Ascending aorta (tissue), 2 donors: ENCODE measurements at regions of chr9 and their contacts with region 1.

Region 1: DNA sequence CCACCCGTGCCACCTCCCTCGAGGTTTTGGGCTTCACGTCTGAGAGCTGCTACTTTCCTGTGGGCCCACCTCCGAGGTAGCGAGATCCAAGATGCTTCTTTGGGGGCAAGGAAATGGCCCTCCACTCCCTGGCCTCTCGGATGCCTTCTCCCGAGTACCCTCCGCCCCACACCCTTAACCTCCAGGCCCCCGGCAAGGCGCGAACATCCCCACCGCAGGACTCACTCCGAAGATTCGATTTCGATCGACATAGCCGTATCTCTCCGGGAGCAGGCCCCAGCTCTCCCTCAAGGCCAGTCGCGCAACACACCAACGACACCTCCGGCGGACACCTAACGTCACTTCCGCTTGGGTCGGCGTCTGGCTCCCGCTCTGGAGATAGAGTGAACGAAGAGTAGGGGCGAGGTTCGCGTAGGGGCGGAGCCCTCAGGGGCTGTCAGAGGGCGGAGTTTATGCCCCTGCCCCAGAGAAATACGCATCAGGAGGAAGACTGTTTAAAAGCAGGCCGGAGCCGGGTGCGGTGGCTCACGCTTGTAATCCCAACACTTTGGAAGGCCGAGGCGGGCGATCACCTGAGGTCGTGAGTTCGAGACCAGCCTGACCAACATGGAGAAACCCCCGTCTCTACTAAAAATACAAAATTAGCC is at the start of gene SMU1:
- DNase-seq: peak; percentile 94 to 99
- H3K4me3 ChIP-seq: peak within 1 kb of the TSS; percentile 83 to 94
- H3K27ac ChIP-seq: peak within 1 kb of the TSS; percentile 94 to 97
- H3K4me1 ChIP-seq: peaks cover 1 to 11% of the 10 kb centered on the region in 2 donors
- H3K27me3 ChIP-seq: no peaks in the 10 kb centered on the region
- CTCF ChIP-seq: no peak
- total RNA-seq, gene SMU1: 7.2 TPM

Region 2: GRCh38 chr9:32748013-32748412 is 328.5 kb before region 1 on chr9:
- intact Hi-C with region 1: no loop called
- DNase-seq: no peak
- H3K4me3 ChIP-seq: no peak overlapping the region
- H3K27ac ChIP-seq: no peak overlapping the region
- H3K4me1 ChIP-seq: no peaks in the 10 kb centered on the region
- H3K27me3 ChIP-seq: no peaks in the 10 kb centered on the region
- CTCF ChIP-seq: no peak

Region 3: DNA sequence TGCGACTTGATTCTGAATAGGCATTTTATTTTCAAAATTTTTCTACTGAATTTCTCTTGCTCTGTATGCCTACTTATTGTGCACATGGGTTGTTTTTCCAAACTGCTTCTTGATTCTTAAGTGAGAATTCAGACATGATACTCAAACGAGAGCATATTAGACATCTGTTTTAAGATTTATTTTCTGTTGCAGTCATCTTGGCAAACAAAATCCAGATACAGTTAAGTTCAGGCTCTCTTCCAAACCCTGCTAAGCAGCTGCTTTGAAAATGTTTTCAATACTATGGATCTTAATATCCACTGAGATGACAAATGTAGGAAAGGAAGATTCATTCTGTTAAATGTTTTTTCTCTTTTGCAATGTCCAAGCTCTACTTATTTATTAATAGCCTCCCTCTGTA is 288.7 kb before region 1 on chr9:
- intact Hi-C with region 1: no loop called
- DNase-seq: no peak
- H3K4me3 ChIP-seq: no peak overlapping the region
- H3K27ac ChIP-seq: no peak overlapping the region
- H3K4me1 ChIP-seq: no peaks in the 10 kb centered on the region
- H3K27me3 ChIP-seq: no peaks in the 10 kb centered on the region
- CTCF ChIP-seq: no peak

Region 4: GRCh38 chr9:33044127-33044673 is 32.3 kb before region 1 on chr9:
- intact Hi-C with region 1: loop called (anchors 2 kb)
- DNase-seq: peak; percentile 71 to 95
- H3K4me3 ChIP-seq: peak overlapping the region; percentile 71 to 77
- H3K27ac ChIP-seq: peak overlapping the region; percentile 97 to 98
- H3K4me1 ChIP-seq: peaks cover 0 to 3% of the 10 kb centered on the region in 2 donors
- H3K27me3 ChIP-seq: no peaks in the 10 kb centered on the region
- CTCF ChIP-seq: no peak

Region 5: DNA sequence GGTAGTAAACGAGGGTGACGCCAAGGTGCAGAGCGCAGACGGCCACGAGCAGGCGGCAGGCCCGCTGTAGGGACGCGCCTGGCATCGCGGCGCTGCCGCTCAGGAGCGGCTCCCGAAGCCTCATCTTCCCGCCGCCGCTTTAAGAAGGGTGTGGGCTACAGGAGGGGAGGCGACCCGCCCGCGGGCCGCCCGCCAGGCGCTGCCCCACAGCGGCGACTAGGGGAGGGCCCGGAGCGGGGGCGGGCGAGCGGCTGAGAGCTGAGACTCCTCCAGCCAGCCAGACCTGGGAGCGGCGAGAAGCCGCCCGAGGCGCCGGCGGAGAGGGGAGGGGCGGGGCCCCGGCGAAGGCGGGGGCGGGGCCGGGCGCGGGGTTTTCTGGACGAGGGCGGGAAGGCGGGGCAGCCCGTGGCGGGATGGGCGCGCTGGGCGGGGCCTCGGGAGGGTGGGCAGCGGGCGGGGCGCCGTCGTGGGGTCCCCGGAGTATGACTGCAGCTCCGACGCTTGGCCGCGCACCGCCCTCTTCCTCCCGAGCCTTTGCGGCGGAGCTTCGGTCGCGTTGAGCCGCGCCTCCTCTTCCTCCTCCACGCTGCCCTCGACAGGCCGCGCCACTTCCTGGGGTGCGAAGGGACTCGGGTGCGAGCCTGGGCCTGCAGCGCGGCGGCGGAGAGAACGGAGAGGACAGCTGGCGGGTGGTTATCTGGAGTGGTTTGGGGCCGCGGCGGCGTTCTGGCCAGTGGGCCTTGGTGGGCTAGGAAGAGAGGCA is 90.7 kb after region 1 on chr9 and contains the start of gene B4GALT1:
- intact Hi-C with region 1: loop called (anchors 2 kb)
- DNase-seq: peak; percentile 82 to 98
- H3K4me3 ChIP-seq: peak within 1 kb of the TSS; percentile 85 to 90
- H3K27ac ChIP-seq: peak within 1 kb of the TSS; percentile 98 to 99
- H3K4me1 ChIP-seq: peaks cover 10 to 34% of the 10 kb centered on the region in 2 donors
- H3K27me3 ChIP-seq: no peaks in the 10 kb centered on the region
- CTCF ChIP-seq: no peak
- total RNA-seq, gene B4GALT1: 100 TPM

Region 6: DNA sequence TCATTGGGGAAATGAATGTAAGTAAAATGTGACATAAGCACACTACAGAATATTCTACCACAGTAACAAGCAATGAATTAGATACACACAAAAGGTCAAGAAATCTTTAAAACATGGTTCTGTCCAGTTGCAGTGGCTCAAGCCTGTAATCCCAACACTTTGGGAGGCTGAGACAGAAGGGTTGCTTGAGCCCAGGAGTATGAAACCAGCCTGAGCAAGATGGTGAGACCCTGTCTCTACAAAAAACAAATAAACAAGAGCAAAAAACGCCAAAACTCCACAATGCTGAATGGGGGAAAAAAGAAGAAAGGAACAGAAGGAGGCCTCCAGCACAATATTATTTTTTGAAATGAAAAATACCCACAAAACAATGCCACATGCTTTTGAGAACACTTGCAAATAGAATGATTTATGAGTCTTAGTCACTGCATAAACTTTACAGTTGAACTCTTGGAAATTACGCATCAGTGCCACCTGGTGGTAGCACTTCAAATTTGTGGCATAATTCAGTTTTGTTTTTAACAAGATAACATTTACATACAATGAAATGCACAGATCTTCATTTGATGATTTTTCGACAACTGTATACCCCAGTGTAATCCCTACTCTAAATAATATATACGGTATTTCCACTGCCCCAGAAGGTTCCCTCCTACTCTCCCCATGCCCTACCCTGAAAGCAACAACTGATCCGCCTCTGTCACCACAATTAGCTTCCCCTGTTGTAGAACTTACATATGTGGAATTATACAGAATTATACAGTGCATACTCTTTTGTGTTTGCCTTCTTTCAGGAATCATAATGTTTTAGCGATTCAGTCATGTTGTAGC is 149.1 kb after region 1 on chr9:
- intact Hi-C with region 1: loop called (anchors 1 kb)
- DNase-seq: peak in 1 of 2 donors; percentile 86
- H3K4me3 ChIP-seq: no peak overlapping the region
- H3K27ac ChIP-seq: peak overlapping the region in 1 of 2 donors; percentile 24
- H3K4me1 ChIP-seq: peaks cover 0 to 5% of the 10 kb centered on the region in 2 donors
- H3K27me3 ChIP-seq: no peaks in the 10 kb centered on the region
- CTCF ChIP-seq: peak; percentile 62 to 76 (median 75)

Region 7: DNA sequence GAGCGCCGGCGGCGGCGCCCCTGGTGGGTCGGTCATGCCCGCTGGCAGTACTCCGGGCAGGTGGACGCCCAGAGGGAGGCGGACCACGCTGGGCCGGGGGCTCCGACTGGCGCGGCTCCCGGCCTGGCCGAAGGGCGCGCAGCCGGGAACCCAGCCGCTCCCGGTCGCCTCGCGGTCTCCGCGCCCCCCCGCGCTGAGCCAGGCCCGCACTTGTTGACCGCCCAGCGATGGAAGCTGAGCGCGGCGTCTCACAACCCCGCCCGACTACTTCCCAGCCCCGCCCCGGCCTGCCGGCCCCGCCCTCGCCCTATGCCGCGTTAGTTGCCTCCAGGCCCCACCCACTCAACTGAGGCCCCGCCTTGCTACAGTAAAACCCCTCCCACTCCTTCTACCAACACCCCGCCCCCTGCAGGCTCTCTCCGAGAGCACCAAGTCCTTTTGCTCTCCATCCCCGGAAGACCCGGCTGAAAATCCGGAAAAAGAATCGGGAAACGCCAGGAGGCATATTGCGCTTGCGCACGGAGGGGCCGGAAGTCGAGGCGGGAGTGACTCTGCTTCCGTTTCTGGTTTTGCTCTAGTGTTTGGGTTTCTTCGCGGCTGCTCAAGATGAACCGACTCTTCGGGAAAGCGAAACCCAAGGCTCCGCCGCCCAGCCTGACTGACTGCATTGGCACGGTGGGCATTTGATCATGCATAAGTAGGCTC is 188.1 kb after region 1 on chr9 and contains the starts of genes BAG1 and CHMP5:
- intact Hi-C with region 1: loop called (anchors 1 kb)
- DNase-seq: peak; percentile 98 to 100
- H3K4me3 ChIP-seq: peak within 1 kb of the TSS; percentile 90 to 95
- H3K27ac ChIP-seq: peak within 1 kb of the TSS; percentile 90 to 92
- H3K4me1 ChIP-seq: peaks cover 7 to 9% of the 10 kb centered on the region in 2 donors
- H3K27me3 ChIP-seq: no peaks in the 10 kb centered on the region
- CTCF ChIP-seq: peak in 1 of 3 experiments; percentile 37
- total RNA-seq, gene BAG1: 58.5 TPM
- total RNA-seq, gene CHMP5: 47.5 TPM

Region 8: GRCh38 chr9:33415501-33416038 is 339.1 kb after region 1 on chr9:
- intact Hi-C with region 1: no loop called
- DNase-seq: peak in 1 of 2 donors; percentile 82
- H3K4me3 ChIP-seq: no peak overlapping the region
- H3K27ac ChIP-seq: no peak overlapping the region
- H3K4me1 ChIP-seq: no peaks in the 10 kb centered on the region
- H3K27me3 ChIP-seq: no peaks in the 10 kb centered on the region
- CTCF ChIP-seq: peak; percentile 48 to 76 (median 70)

Region 9: DNA sequence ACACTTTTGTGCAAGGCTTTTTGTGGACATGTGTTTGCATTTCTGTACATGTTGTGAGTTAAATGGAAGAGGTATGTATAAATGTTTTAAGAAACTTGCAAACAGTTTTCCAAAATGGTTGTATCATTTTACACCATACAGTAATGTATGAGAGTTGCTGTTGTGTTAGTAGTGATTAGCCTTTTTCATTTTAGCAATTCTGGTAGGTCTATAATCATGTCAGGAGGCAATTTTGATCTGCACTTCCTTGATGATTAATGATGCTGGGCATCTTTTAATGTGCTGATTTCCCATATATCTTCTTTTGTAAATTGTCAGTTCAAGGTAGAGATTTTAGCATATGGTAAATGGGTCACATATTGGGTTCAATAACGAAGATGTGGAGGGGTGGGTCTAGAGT is 534.9 kb after region 1 on chr9:
- intact Hi-C with region 1: no loop called
- DNase-seq: no peak
- H3K4me3 ChIP-seq: no peak overlapping the region
- H3K27ac ChIP-seq: no peak overlapping the region
- H3K4me1 ChIP-seq: no peaks in the 10 kb centered on the region
- H3K27me3 ChIP-seq: no peaks in the 10 kb centered on the region
- CTCF ChIP-seq: no peak